Caco-2 (cell line): ENCODE measurements at regions of chr4 and their contacts with region 1.

Region 1: DNA sequence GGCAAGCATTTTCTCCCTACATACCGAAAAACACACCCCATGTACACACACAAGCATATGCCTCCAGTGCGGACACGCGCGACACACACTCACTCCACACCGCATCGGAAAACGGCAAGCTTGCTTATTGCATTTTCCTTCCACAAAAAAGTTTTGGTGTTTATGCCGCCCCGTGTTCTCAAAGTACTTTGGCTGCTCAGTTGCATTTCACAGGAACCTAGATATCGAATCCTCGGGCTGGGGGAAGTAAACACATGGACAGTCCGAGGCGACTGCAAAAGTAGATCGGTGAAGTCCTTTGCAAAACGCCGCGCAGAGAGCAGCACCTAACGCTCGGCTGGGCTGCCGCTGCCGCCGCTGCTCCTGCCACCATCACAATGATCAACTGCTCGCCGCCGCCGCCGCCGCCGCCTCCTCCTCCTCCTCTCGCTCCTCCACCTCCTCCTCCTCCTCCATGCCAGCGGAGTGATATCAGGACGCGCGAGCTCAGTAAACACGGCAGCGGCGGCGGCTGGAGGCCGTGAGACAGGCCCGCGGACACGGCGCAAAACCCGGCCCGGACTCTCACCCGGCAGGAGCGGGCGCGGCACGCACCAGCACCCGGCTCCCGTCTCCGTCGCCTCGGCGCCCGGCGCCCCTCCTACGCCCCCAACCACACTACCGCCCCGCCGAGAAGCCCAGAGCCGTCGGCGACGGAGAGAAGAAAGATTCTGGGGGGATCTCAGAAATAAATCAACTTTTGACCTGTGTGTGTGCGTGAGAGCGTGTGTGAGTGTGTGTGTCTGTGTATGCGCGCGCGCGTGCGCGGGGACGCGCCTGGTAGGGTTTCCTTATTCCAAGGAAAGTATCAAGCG is at the start of gene MAML3:
- DNase-seq: peak; percentile 95 to 96
- H3K4me3 ChIP-seq: peak within 1 kb of the TSS; percentile 91
- H3K4me3 Mint-ChIP-seq: peak within 1 kb of the TSS; percentile 97
- H3K27ac Mint-ChIP-seq: peak within 1 kb of the TSS; percentile 97
- H3K4me1 ChIP-seq: 0 out of 2 replicates have a peak, but pooled peaks cover 5% of the 10 kb centered on the region
- H3K4me1 Mint-ChIP-seq: no peaks in the 10 kb centered on the region
- H3K27me3 ChIP-seq: no peaks in the 10 kb centered on the region
- H3K27me3 Mint-ChIP-seq: no peaks in the 10 kb centered on the region
- CTCF ChIP-seq: no peak
- total RNA-seq, gene MAML3: 12.1 TPM in 2 replicates

Region 2: GRCh38 chr4:139665690-139666529 is 488.0 kb before region 1 on chr4 and contains the start of gene MGST2:
- CTCF ChIA-PET with region 1: interaction called, 3 read pairs
- POLR2A ChIA-PET with region 1: no interaction called
- intact Hi-C with region 1: loop called (anchors 5 kb)
- DNase-seq: peak; percentile 92 to 97
- H3K4me3 ChIP-seq: peak within 1 kb of the TSS; percentile 52
- H3K4me3 Mint-ChIP-seq: peak within 1 kb of the TSS; percentile 90
- H3K27ac Mint-ChIP-seq: peak within 1 kb of the TSS; percentile 94
- H3K4me1 ChIP-seq: peaks cover 83% of the 10 kb centered on the region
- H3K4me1 Mint-ChIP-seq: peaks cover 53% of the 10 kb centered on the region
- H3K27me3 ChIP-seq: no peaks in the 10 kb centered on the region
- H3K27me3 Mint-ChIP-seq: no peaks in the 10 kb centered on the region
- CTCF ChIP-seq: no peak
- total RNA-seq, gene MGST2: 81.7 and 88.4 TPM in 2 replicates

Region 3: DNA sequence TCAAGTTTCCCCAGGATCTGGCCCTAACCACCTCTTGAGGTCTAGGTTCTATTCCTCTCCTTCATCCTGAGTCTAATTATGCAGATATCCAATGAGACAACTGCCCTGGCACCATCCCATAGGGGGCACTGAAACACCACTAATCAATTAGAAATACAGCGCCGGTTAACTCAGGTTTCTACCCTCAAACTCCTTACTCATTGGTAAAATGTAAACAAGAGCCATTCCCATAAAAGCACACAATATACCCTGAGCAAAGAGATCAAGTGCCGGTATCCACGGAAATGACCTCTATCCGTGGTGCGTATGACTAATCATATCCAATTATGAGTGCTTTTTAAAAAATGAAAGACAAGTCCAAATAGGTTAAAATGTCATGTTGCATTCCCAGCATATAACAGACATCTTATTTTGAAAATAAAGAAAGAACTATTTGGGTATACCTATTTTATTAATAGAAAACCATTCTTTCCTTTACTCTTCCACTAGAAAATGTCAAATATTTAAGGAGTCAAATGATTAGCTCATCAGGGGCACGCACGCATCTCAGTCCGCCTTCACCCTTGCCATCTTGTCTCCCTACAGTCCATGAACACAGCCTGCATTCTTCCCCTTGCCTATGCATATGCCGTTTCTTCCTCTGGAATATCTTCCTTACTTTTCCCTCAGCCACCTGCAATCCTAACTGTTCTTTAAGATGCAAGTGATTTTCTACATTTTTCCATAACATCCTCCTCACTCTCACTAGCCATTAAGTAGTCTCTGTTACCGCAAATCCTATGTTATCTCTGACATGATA is 141.1 kb before region 1 on chr4:
- CTCF ChIA-PET with region 1: no interaction called
- POLR2A ChIA-PET with region 1: interaction called, 5 read pairs
- intact Hi-C with region 1: loop called (anchors 1 kb)
- DNase-seq: peak; percentile 69 to 77
- H3K4me3 ChIP-seq: no peak overlapping the region
- H3K4me3 Mint-ChIP-seq: peak overlapping the region; percentile 0
- H3K27ac Mint-ChIP-seq: peak overlapping the region; percentile 23
- H3K4me1 ChIP-seq: peaks cover 18% of the 10 kb centered on the region
- H3K4me1 Mint-ChIP-seq: peaks cover 30% of the 10 kb centered on the region
- H3K27me3 ChIP-seq: no peaks in the 10 kb centered on the region
- H3K27me3 Mint-ChIP-seq: no peaks in the 10 kb centered on the region
- CTCF ChIP-seq: peak; percentile 56 to 65

Region 4: GRCh38 chr4:140061194-140061593 is 92.8 kb before region 1 on chr4:
- CTCF ChIA-PET with region 1: no interaction called
- POLR2A ChIA-PET with region 1: interaction called, 7 read pairs
- intact Hi-C with region 1: loop called (anchors 2 kb)
- DNase-seq: peak in 1 of 2 experiments; percentile 41
- H3K4me3 ChIP-seq: no peak overlapping the region
- H3K4me3 Mint-ChIP-seq: peak overlapping the region; percentile 38
- H3K27ac Mint-ChIP-seq: peak overlapping the region; percentile 62
- H3K4me1 ChIP-seq: peaks cover 61% of the 10 kb centered on the region
- H3K4me1 Mint-ChIP-seq: peaks cover 48% of the 10 kb centered on the region
- H3K27me3 ChIP-seq: no peaks in the 10 kb centered on the region
- H3K27me3 Mint-ChIP-seq: no peaks in the 10 kb centered on the region
- CTCF ChIP-seq: no peak

Region 5: GRCh38 chr4:140092094-140092849 is 61.7 kb before region 1 on chr4:
- CTCF ChIA-PET with region 1: no interaction called
- POLR2A ChIA-PET with region 1: no interaction called
- intact Hi-C with region 1: loop called (anchors 1 kb)
- DNase-seq: peak; percentile 53 to 64
- H3K4me3 ChIP-seq: peak overlapping the region; percentile 20
- H3K4me3 Mint-ChIP-seq: peak overlapping the region; percentile 73
- H3K27ac Mint-ChIP-seq: peak overlapping the region; percentile 63
- H3K4me1 ChIP-seq: peaks cover 58% of the 10 kb centered on the region
- H3K4me1 Mint-ChIP-seq: peaks cover 75% of the 10 kb centered on the region
- H3K27me3 ChIP-seq: no peaks in the 10 kb centered on the region
- H3K27me3 Mint-ChIP-seq: no peaks in the 10 kb centered on the region
- CTCF ChIP-seq: no peak

Region 6: DNA sequence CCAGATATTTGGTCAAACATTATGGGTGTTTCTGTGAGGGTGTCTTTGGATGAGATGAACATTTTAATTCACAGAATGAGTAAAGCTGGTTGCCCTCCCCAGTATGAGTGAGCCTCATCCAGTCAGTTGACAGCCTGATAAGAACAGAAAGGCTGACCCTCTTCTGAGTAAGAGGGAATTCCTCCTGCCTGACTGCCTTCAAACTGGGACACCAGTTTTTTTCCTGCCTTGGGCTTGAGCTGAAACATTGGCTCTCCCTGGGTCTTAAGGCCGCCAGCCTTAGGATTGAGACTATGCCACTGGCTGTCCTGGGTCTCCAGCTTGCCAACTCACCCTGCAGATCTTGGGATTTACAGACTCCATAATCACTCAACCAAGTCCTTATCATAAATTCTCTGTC is 14.5 kb after region 1 on chr4:
- CTCF ChIA-PET with region 1: no interaction called
- POLR2A ChIA-PET with region 1: no interaction called
- intact Hi-C with region 1: no loop called
- DNase-seq: no peak
- H3K4me3 ChIP-seq: no peak overlapping the region
- H3K4me3 Mint-ChIP-seq: no peak overlapping the region
- H3K27ac Mint-ChIP-seq: no peak overlapping the region
- H3K4me1 ChIP-seq: no peaks in the 10 kb centered on the region
- H3K4me1 Mint-ChIP-seq: no peaks in the 10 kb centered on the region
- H3K27me3 ChIP-seq: no peaks in the 10 kb centered on the region
- H3K27me3 Mint-ChIP-seq: no peaks in the 10 kb centered on the region
- CTCF ChIP-seq: no peak

Region 7: GRCh38 chr4:140252742-140253555 is 99.0 kb after region 1 on chr4:
- CTCF ChIA-PET with region 1: interaction called, 3 read pairs
- POLR2A ChIA-PET with region 1: interaction called, 7 read pairs
- intact Hi-C with region 1: loop called (anchors 1 kb)
- DNase-seq: peak; percentile 82 to 87
- H3K4me3 ChIP-seq: peak overlapping the region; percentile 66
- H3K4me3 Mint-ChIP-seq: peak overlapping the region; percentile 0
- H3K27ac Mint-ChIP-seq: peak overlapping the region; percentile 88
- H3K4me1 ChIP-seq: peaks cover 58% of the 10 kb centered on the region
- H3K4me1 Mint-ChIP-seq: peaks cover 26% of the 10 kb centered on the region
- H3K27me3 ChIP-seq: no peaks in the 10 kb centered on the region
- H3K27me3 Mint-ChIP-seq: no peaks in the 10 kb centered on the region
- CTCF ChIP-seq: peak; percentile 79 to 90